CD4-positive, alpha-beta T cell (primary cell): ENCODE measurements at regions of chr17 and their contacts with region 1.

Region 1: GRCh38 chr17:40355123-40355803 is 9.3 kb downstream of the GJD3 start:
- DNase-seq: peak; percentile 65 to 86 (median 78)
- ATAC-seq: peak; percentile 76
- H3K4me3 ChIP-seq: no peak overlapping the region
- H3K4me3 Mint-ChIP-seq: no peak overlapping the region
- H3K27ac ChIP-seq: no peak overlapping the region
- H3K27ac Mint-ChIP-seq: peak overlapping the region; percentile 36
- H3K4me1 ChIP-seq: peaks cover 15% of the 10 kb centered on the region
- H3K4me1 Mint-ChIP-seq: peaks cover 17% of the 10 kb centered on the region
- H3K27me3 ChIP-seq: peaks cover 0 to 3% of the 10 kb centered on the region in 2 experiments
- H3K27me3 Mint-ChIP-seq: peaks cover 3% of the 10 kb centered on the region
- CTCF ChIP-seq: peak; percentile 95

Region 2: GRCh38 chr17:39563476-39563875 is 791.8 kb before region 1 on chr17:
- CTCF ChIA-PET with region 1: no interaction called
- POLR2A ChIA-PET with region 1: no interaction called
- intact Hi-C with region 1: no loop called
- DNase-seq: no peak
- ATAC-seq: no peak
- H3K4me3 ChIP-seq: no peak overlapping the region
- H3K4me3 Mint-ChIP-seq: no peak overlapping the region
- H3K27ac ChIP-seq: no peak overlapping the region
- H3K27ac Mint-ChIP-seq: no peak overlapping the region
- H3K4me1 ChIP-seq: no peaks in the 10 kb centered on the region
- H3K4me1 Mint-ChIP-seq: no peaks in the 10 kb centered on the region
- H3K27me3 ChIP-seq: no peaks in the 10 kb centered on the region
- H3K27me3 Mint-ChIP-seq: no peaks in the 10 kb centered on the region
- CTCF ChIP-seq: no peak

Region 3: GRCh38 chr17:40203131-40203530 is 152.1 kb before region 1 on chr17:
- CTCF ChIA-PET with region 1: no interaction called
- POLR2A ChIA-PET with region 1: no interaction called
- intact Hi-C with region 1: loop called (anchors 1 to 5 kb)
- DNase-seq: no peak
- ATAC-seq: no peak
- H3K4me3 ChIP-seq: no peak overlapping the region
- H3K4me3 Mint-ChIP-seq: no peak overlapping the region
- H3K27ac ChIP-seq: no peak overlapping the region
- H3K27ac Mint-ChIP-seq: no peak overlapping the region
- H3K4me1 ChIP-seq: peaks cover 7% of the 10 kb centered on the region
- H3K4me1 Mint-ChIP-seq: peaks cover 5% of the 10 kb centered on the region
- H3K27me3 ChIP-seq: no peaks in the 10 kb centered on the region
- H3K27me3 Mint-ChIP-seq: peaks cover 9% of the 10 kb centered on the region
- CTCF ChIP-seq: no peak

Region 4: GRCh38 chr17:40303009-40303657 is 52.1 kb before region 1 on chr17:
- CTCF ChIA-PET with region 1: interaction called, 62 read pairs
- POLR2A ChIA-PET with region 1: interaction called, 25 read pairs
- intact Hi-C with region 1: loop called (anchors 1 kb)
- DNase-seq: peak in 8 of 14 experiments; percentile 46 to 83 (median 61)
- ATAC-seq: peak; percentile 67
- H3K4me3 ChIP-seq: no peak overlapping the region
- H3K4me3 Mint-ChIP-seq: no peak overlapping the region
- H3K27ac ChIP-seq: no peak overlapping the region
- H3K27ac Mint-ChIP-seq: no peak overlapping the region
- H3K4me1 ChIP-seq: peaks cover 33% of the 10 kb centered on the region
- H3K4me1 Mint-ChIP-seq: peaks cover 16% of the 10 kb centered on the region
- H3K27me3 ChIP-seq: no peaks in the 10 kb centered on the region
- H3K27me3 Mint-ChIP-seq: no peaks in the 10 kb centered on the region
- CTCF ChIP-seq: peak; percentile 93

Region 5: DNA sequence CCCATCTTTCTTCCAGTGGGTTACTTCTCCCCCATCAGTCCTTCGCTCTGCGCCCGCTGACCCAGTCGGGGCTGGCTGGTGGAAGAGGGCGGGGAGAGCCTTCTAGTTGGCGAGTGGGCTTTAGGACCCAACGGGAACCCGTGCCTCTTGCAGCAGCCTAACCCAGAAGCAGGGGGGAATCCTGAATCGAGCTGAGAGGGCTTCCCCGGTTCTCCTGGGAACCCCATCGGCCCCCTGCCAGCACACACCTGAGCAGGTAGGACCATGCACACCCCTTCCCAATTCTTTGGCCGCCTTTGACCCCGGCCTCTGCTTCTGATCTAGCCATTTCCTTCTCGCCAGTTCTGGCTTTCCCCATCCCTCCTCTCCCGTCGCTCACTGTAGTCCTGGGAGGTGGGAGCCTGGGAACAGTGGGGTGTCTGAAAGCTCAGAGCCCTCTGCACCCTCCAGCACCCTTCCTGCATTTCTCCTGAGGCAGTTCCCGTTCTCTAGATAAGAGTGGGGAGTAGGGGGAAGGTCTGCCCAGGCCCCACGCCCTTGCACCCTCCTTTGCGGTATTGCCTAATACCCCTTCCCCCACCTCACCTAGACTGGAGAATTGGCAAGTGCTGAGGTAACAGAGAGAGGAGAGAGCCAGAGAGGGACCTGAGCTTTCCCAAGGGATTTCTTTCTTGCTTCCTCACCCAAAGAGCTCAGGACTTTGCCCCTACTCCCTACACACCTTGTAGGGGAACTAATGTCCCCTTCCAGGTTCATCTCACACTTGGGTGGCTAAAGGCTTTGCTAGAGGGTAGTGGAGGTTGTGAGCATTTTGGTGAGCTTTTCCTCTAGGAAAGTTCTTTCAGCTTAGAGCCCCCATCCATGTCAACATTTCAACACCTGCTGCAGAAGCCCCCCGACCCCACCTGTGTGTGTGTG is 46.0 kb before region 1 on chr17 and contains the start of gene RARA:
- CTCF ChIA-PET with region 1: interaction called, 62 read pairs
- POLR2A ChIA-PET with region 1: interaction called, 25 read pairs
- intact Hi-C with region 1: no loop called
- DNase-seq: peak in 3 of 14 experiments; percentile 37 to 54 (median 50)
- ATAC-seq: peak; percentile 48
- H3K4me3 ChIP-seq: peak within 1 kb of the TSS; percentile 24
- H3K4me3 Mint-ChIP-seq: no peak within 1 kb of the TSS
- H3K27ac ChIP-seq: no peak within 1 kb of the TSS
- H3K27ac Mint-ChIP-seq: no peak within 1 kb of the TSS
- H3K4me1 ChIP-seq: peaks cover 69% of the 10 kb centered on the region
- H3K4me1 Mint-ChIP-seq: peaks cover 31% of the 10 kb centered on the region
- H3K27me3 ChIP-seq: no peaks in the 10 kb centered on the region
- H3K27me3 Mint-ChIP-seq: no peaks in the 10 kb centered on the region
- CTCF ChIP-seq: no peak
- total RNA-seq, gene RARA: 114 to 115 TPM

Region 6: GRCh38 chr17:40323391-40324381 is 31.6 kb before region 1 on chr17:
- CTCF ChIA-PET with region 1: interaction called, 25 read pairs
- POLR2A ChIA-PET with region 1: interaction called, 19 read pairs
- intact Hi-C with region 1: no loop called
- DNase-seq: peak in 12 of 14 experiments; percentile 32 to 97 (median 60)
- ATAC-seq: peak; percentile 15
- H3K4me3 ChIP-seq: peak overlapping the region; percentile 96
- H3K4me3 Mint-ChIP-seq: peak overlapping the region; percentile 95
- H3K27ac ChIP-seq: peak overlapping the region; percentile 99
- H3K27ac Mint-ChIP-seq: peak overlapping the region; percentile 99
- H3K4me1 ChIP-seq: peaks cover 99% of the 10 kb centered on the region
- H3K4me1 Mint-ChIP-seq: peaks cover 98% of the 10 kb centered on the region
- H3K27me3 ChIP-seq: no peaks in the 10 kb centered on the region
- H3K27me3 Mint-ChIP-seq: no peaks in the 10 kb centered on the region
- CTCF ChIP-seq: no peak

Region 7: DNA sequence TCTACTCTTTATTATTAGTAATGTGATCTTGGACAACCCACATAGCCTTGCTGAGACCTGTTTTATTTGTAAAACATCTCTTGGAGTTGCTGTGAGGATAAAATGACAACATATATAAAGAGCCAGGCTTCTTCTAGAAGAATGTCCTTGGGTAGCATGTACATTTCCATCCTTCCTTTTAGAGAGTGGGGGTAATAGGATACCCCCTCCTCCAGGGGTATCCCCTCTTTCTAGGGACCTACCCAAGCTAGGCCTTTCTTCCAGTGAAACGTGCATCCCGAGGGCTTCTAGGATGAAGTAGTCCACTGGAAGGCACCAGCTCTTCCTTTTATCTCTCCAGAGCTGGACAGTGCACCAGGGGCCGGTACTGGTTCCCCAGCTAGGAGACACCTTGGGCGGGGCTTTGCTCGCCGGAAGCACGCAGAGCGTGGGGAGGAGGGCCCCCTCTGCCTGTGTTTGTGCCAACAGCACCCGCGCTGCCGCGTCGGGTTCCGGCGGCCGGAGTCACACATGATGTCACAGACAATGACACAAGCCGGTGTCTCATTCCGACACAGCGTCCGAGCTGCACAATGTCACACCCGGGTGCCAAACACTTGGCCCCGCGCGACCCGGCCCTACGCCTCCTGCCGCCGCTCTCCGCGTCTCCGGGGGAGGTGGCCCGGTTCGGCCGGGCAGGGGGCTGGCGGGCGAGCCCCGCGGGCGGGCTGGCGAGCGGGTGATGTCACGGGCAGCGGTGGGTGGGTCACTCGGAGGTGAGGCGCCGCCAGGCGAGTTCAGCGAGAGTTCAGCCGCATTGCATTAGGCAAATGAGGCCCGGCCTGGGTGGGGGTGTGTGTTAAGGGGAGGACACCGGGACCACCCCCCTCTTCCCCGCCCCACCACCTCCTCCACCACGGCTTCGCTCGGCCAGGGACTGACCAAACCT is 14.1 kb before region 1 on chr17:
- CTCF ChIA-PET with region 1: interaction called, 12 read pairs
- POLR2A ChIA-PET with region 1: interaction called, 4 read pairs
- intact Hi-C with region 1: no loop called
- DNase-seq: peak; percentile 76 to 96 (median 85)
- ATAC-seq: peak; percentile 78
- H3K4me3 ChIP-seq: peak overlapping the region; percentile 72
- H3K4me3 Mint-ChIP-seq: peak overlapping the region; percentile 83
- H3K27ac ChIP-seq: peak overlapping the region; percentile 73 to 90
- H3K27ac Mint-ChIP-seq: peak overlapping the region; percentile 93
- H3K4me1 ChIP-seq: peaks cover 89% of the 10 kb centered on the region
- H3K4me1 Mint-ChIP-seq: peaks cover 76% of the 10 kb centered on the region
- H3K27me3 ChIP-seq: no peaks in the 10 kb centered on the region
- H3K27me3 Mint-ChIP-seq: no peaks in the 10 kb centered on the region
- CTCF ChIP-seq: peak; percentile 55